ENCODE measurements at regions of chr2 and their contacts with region 1.

Region 1: DNA sequence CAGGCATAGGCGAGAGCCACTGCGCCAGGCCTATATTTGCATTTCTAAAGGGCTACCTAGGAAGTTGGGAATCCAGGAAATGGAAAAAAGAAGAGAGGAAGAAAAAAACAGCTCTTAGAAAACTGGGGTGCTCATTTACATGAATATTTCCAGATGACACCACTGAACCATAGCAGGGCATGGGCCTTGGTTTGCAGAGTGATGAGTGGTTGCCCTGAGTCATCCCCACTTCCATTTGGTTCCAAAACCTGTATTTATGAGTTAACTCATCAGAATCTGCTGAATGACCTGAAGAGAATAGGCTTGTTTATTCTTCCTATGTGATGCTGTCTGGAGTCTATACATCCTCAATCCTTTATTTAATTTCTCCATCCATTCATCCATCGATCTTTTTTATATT is 36.2 kb downstream of the EHD3 start:
- DNase-seq: no peak
- ATAC-seq: no peak
- H3K4me3 ChIP-seq: no peak overlapping the region
- H3K27ac ChIP-seq: peak overlapping the region in 1 of 12 donors; percentile 17
- H3K4me1 ChIP-seq: peaks cover 0 to 42% (median under 1%) of the 10 kb centered on the region in 12 donors
- H3K27me3 ChIP-seq: no peaks in the 10 kb centered on the region
- CTCF ChIP-seq: no peak
- POLR2A ChIP-seq: no peak

Region 2: GRCh38 chr2:29881089-29881733 is 1388.9 kb before region 1 on chr2:
- intact Hi-C with region 1: no loop called
- DNase-seq: no peak
- ATAC-seq: no peak
- H3K4me3 ChIP-seq: no peak overlapping the region
- H3K27ac ChIP-seq: no peak overlapping the region
- H3K4me1 ChIP-seq: no peaks in the 10 kb centered on the region
- H3K27me3 ChIP-seq: peaks cover 0 to 18% (median 0%) of the 10 kb centered on the region in 9 donors
- CTCF ChIP-seq: no peak
- POLR2A ChIP-seq: no peak

Region 3: GRCh38 chr2:30979822-30980245 is 290.3 kb before region 1 on chr2:
- intact Hi-C with region 1: no loop called
- DNase-seq: peak in 3 of 5 donors; percentile 25 to 70 (median 48)
- ATAC-seq: peak; percentile 61 to 76 (median 70)
- H3K4me3 ChIP-seq: no peak overlapping the region
- H3K27ac ChIP-seq: peak overlapping the region in 6 of 12 donors; percentile 13 to 56 (median 32)
- H3K4me1 ChIP-seq: peaks cover 0 to 27% (median 11%) of the 10 kb centered on the region in 12 donors
- H3K27me3 ChIP-seq: no peaks in the 10 kb centered on the region
- CTCF ChIP-seq: peak in 7 of 12 donors; percentile 11 to 59 (median 38)
- POLR2A ChIP-seq: no peak

Region 4: DNA sequence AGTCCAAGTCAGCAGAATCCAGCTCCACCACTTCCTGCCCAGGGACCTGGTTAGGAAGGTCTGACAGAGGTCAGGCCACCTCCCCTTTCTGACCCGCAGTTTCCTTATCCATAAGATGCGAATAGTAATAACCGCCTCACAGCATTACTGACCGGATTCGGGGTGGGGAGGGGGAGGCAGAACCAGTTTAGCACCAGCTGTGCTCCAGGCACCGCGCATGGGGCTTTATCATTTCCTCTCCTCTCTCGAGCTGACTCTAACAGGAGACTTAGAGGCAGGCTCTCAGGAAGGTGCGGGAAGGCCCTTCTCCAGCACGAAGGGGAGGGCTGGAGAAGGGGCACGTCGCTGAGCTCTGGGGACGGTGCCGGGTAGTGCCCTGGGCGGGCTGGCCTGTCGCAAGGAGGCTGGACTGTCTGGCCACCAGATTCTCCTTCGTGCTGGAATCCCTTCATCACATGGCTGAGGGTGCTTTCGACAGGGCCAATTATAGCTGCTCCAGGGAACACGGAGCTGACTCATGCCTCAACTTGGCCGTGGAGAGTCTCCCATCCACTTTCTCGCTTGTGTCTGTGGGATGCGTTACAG is 30.5 kb before region 1 on chr2:
- intact Hi-C with region 1: loop called in 2 of 10 experiments (anchors 5 kb)
- DNase-seq: peak; percentile 75 to 89 (median 81)
- ATAC-seq: peak; percentile 90 to 93 (median 92)
- H3K4me3 ChIP-seq: peak overlapping the region in 2 of 12 donors; percentile 2 to 4
- H3K27ac ChIP-seq: peak overlapping the region; percentile 73 to 95 (median 90)
- H3K4me1 ChIP-seq: peaks cover 11 to 71% (median 55%) of the 10 kb centered on the region in 12 donors
- H3K27me3 ChIP-seq: no peaks in the 10 kb centered on the region
- CTCF ChIP-seq: no peak
- POLR2A ChIP-seq: peak in 1 of 2 donors; percentile 51

Region 5: GRCh38 chr2:31319406-31320175 is 49.5 kb after region 1 on chr2:
- intact Hi-C with region 1: loop called in 2 of 10 experiments (anchors 5 to 10 kb)
- DNase-seq: peak in 1 of 5 donors; percentile 44
- ATAC-seq: peak; percentile 57 to 75 (median 66)
- H3K4me3 ChIP-seq: no peak overlapping the region
- H3K27ac ChIP-seq: peak overlapping the region in 7 of 12 donors; percentile 3 to 82 (median 23)
- H3K4me1 ChIP-seq: peaks cover 2 to 42% (median 14%) of the 10 kb centered on the region in 12 donors
- H3K27me3 ChIP-seq: no peaks in the 10 kb centered on the region
- CTCF ChIP-seq: no peak
- POLR2A ChIP-seq: no peak